Sciatic nerve (tissue), 2 donors: ENCODE measurements at regions of chr1 and their contacts with region 1.

Region 1: GRCh38 chr1:7069931-7070330 is 284.7 kb downstream of the CAMTA1 start:
- DNase-seq: no peak
- ATAC-seq: peak; percentile 20

Region 2: GRCh38 chr1:6727535-6727934 is 342.4 kb before region 1 on chr1:
- intact Hi-C with region 1: loop called (anchors 10 kb)
- DNase-seq: no peak
- ATAC-seq: no peak